RWPE1 (cell line): ENCODE measurements at regions of chr1 and their contacts with region 1.

Region 1: GRCh38 chr1:156728597-156729462 is at the start of gene ISG20L2:
- DNase-seq: peak; percentile 95
- H3K27ac ChIP-seq: peak within 1 kb of the TSS; percentile 92
- CTCF ChIP-seq: no peak

Region 2: GRCh38 chr1:155893389-155894142 is 835.3 kb before region 1 on chr1:
- CTCF ChIA-PET with region 1: no interaction called
- POLR2A ChIA-PET with region 1: no interaction called
- DNase-seq: peak; percentile 71
- H3K27ac ChIP-seq: peak overlapping the region; percentile 91
- CTCF ChIP-seq: no peak

Region 3: GRCh38 chr1:156591432-156592157 is 137.2 kb before region 1 on chr1 and contains the start of gene NAXE:
- CTCF ChIA-PET with region 1: no interaction called
- POLR2A ChIA-PET with region 1: no interaction called
- DNase-seq: peak; percentile 82
- H3K27ac ChIP-seq: peak within 1 kb of the TSS; percentile 79
- CTCF ChIP-seq: no peak

Region 4: DNA sequence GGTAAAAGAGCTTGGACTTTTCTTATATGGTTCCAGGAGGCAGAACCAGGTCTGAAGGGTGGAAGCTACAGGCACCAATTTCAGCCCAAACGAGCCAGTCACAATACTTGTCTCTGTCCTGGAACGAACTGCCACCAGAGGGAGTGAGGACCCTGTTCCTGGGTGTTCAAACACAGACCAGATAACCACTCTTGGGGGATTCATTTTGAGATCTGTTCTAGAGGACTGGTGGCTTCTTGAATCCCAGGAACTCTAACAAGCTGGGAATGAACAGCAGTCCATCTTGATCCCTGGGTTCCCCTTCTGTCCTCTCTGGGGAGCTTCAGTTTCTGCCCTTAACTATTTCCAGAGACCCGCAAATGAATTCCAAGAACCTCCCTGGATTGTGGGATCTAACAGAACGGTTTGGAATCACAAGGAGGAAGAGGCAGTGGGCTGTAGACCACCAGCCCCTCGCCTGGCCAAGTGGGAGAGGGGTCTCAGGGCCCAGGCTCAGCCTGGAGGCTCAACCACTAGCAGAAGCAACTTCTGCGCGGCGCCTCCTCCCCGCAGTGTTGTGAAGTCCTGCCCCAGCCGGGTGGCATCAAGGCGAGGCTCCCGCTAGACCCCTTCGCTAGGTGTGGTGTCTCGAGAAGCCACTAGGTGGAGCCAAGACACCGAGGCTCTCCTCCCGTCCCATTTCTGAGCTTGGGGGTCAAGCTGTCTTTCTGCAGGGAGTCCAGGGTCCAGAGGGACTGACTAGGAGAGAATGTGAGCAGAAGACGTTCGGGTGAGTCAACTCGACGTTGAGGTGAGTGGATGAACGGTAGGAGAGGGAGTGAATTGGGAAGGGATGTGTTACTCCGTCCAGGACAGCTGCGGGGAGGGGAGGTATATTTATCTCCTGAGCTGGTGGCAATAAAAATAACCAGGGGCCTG is 39.5 kb before region 1 on chr1:
- CTCF ChIA-PET with region 1: interaction called, 178 read pairs
- POLR2A ChIA-PET with region 1: interaction called, 10 read pairs
- DNase-seq: peak; percentile 83
- H3K27ac ChIP-seq: peak overlapping the region; percentile 82
- CTCF ChIP-seq: peak; percentile 88

Region 5: DNA sequence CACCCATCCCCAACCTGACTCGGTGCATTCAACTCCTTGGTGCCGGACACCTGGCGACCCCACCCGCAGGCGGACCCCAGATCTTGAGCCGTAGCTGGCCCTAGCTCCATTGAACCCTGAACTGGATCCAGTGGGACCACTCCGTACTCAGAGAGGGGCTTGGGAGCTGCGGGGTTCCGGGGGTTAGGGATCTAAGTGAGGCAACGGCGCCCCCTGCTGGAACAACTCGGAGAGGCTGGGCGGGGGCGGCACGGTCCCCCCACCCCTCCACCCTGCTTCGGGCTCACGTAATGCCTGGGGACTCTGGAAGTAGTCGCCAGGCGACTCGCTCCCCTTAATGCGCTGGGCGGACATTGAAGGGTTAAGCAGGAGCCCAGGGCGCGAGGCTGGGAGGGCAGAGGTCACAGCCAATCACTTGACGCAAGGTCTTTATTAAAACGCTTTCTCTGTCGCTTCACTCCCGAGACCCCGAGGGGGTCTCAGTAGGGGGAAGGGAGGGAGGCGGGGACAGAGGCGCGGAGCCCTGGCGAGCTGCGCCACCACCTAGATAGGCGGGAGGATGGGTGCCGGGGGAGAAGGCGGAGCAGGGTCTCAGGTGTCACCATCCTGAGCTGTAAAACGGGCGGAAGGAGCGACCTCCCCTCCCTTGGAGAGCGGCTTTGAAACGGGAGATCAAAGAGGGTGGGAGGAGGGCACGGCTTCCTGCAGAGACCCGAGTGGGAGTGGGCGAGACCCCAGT is 22.7 kb before region 1 on chr1:
- CTCF ChIA-PET with region 1: interaction called, 29 read pairs
- POLR2A ChIA-PET with region 1: no interaction called
- DNase-seq: no peak
- H3K27ac ChIP-seq: peak overlapping the region; percentile 95
- CTCF ChIP-seq: peak; percentile 87

Region 6: GRCh38 chr1:156860113-156860627 is 131.3 kb after region 1 on chr1:
- CTCF ChIA-PET with region 1: interaction called, 44 read pairs
- POLR2A ChIA-PET with region 1: interaction called, 5 read pairs
- DNase-seq: peak; percentile 62
- H3K27ac ChIP-seq: no peak overlapping the region
- CTCF ChIP-seq: peak; percentile 91

Region 7: GRCh38 chr1:157011845-157012244 is 283.0 kb after region 1 on chr1:
- CTCF ChIA-PET with region 1: no interaction called
- POLR2A ChIA-PET with region 1: no interaction called
- DNase-seq: no peak
- H3K27ac ChIP-seq: no peak overlapping the region
- CTCF ChIP-seq: no peak